A549 (cell line): ENCODE measurements at regions of chr10 and their contacts with region 1.

Region 1: GRCh38 chr10:6151087-6151977 is 51.4 kb upstream of the PFKFB3 start:
- DNase-seq: peak; percentile 60 to 66
- ATAC-seq: peak; percentile 89 to 94
- H3K4me3 ChIP-seq: no peak overlapping the region
- H3K27ac ChIP-seq: no peak overlapping the region
- H3K4me1 ChIP-seq: no peaks in the 10 kb centered on the region
- CTCF ChIP-seq: peak; percentile 65
- EP300 ChIP-seq: no peak
- POLR2A ChIP-seq: no peak
- RAD21 ChIP-seq: peak; percentile 25 to 47; a peak in 3 of 5 replicates

Region 2: GRCh38 chr10:6108603-6109443 is 42.5 kb before region 1 on chr10:
- CTCF ChIA-PET with region 1: interaction called, 16 read pairs
- POLR2A ChIA-PET with region 1: no interaction called
- DNase-seq: peak; percentile 57 to 65
- ATAC-seq: peak in 1 of 2 experiments; percentile 58; a peak in 2 of 6 replicates
- H3K4me3 ChIP-seq: no peak overlapping the region
- H3K27ac ChIP-seq: peak overlapping the region in 1 of 2 experiments; percentile 36; a peak in 1 of 6 replicates
- H3K4me1 ChIP-seq: peaks cover 25% of the 10 kb centered on the region; the same call in 2 of the 3 replicates
- CTCF ChIP-seq: peak; percentile 86
- EP300 ChIP-seq: no peak
- POLR2A ChIP-seq: no peak
- RAD21 ChIP-seq: peak; percentile 82 to 84

Region 3: DNA sequence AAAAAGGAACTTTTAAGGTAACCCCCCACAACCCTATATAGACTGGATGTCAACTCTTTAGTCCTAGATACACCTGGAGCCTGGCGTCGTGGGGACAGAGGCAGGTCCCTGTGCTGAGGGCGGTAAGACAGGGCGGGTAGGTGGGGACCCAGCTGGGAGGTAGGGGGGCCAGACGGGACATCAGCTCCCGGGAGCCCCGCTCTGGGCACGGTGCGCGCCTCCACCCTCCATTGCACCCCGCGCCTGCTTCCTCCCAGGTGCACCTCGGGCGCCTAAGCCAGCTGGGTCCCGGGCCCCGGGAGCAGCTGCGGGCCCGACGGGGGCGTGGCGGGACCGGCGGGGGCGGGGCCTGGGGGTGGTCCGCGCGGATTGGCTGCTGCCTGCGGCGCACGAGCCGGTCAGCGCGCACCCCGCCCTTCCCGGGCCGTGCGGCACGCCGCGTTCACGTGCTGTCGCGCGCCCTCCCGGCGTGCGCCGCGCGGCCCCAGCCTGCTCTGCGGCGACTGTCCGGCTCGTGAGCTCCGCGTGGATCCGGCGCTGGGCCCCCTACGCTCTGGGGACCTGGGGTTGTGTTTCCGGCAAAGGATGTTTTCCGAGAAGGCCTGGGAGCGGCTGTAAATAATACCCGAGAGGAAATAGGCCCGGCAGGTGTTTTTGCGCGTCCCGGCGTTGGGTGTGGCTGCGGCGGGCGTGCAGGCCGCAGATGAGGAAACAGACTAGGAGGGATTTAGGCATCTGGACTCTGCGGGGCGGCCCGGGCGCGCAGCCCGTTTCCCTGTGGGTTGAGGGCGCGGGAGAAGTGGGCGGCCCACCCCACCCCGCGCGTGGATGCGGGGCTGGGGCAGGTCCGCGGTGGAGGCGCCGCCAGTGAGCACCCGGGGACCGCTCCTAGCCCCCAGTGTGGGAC is 12.3 kb after region 1 on chr10:
- CTCF ChIA-PET with region 1: interaction called, 15 read pairs
- POLR2A ChIA-PET with region 1: interaction called, 6 read pairs
- DNase-seq: peak; percentile 80 to 89
- ATAC-seq: peak; percentile 97 to 99
- H3K4me3 ChIP-seq: peak overlapping the region; percentile 100
- H3K27ac ChIP-seq: peak overlapping the region; percentile 87 to 94
- H3K4me1 ChIP-seq: peaks cover 16% of the 10 kb centered on the region; the same call in 1 of the 3 replicates
- CTCF ChIP-seq: no peak
- EP300 ChIP-seq: no peak
- POLR2A ChIP-seq: peak; percentile 61
- RAD21 ChIP-seq: no peak